ENCODE measurements at regions of chr12 and their contacts with region 1.

Region 1: GRCh38 chr12:2431810-2432209 is 363.0 kb upstream of the FKBP4 start:
- DNase-seq: no peak
- H3K4me3 ChIP-seq: no peak overlapping the region
- H3K27ac ChIP-seq: no peak overlapping the region
- H3K4me1 ChIP-seq: no peaks in the 10 kb centered on the region
- H3K27me3 ChIP-seq: no peaks in the 10 kb centered on the region
- CTCF ChIP-seq: no peak
- POLR2A ChIP-seq: no peak

Region 2: DNA sequence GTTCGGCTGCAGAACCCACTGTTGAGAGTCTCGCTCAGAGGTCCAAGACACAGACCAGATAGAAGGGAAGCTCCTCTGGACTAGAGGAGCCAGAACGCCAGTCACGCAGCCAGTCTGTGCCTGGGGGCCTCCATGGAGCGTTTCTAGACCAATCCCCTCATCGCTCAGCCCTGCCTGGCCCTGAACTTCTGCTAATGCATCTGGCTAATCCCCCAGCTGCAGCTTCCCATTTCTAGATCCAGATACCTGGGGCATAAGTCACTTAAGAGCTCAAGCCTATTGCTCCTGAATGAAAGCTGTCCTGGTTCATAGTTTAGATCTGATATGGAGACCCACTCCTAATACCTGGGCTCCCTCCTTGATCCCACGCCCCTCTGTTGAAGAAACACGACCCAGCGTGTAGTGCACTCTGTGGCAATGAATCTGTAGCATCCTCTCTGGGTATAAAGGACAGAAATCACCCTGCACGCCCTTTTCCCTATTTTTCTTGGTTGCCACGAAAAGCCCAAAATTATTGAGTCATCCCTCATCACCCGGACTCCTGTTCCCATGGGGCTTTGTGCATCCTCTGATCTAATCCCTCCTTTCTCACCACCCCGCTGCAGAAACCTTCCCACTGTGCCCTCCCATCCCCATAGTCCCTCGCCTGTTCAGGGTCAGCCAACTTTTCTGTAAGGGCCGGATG is 21.4 kb after region 1 on chr12:
- CTCF ChIA-PET with region 1: no interaction called
- POLR2A ChIA-PET with region 1: no interaction called
- dilution Hi-C with region 1: no loop called
- intact Hi-C with region 1: loop called (anchors 1 kb)
- DNase-seq: no peak
- H3K4me3 ChIP-seq: no peak overlapping the region
- H3K27ac ChIP-seq: no peak overlapping the region
- H3K4me1 ChIP-seq: no peaks in the 10 kb centered on the region
- H3K27me3 ChIP-seq: no peaks in the 10 kb centered on the region
- CTCF ChIP-seq: no peak
- POLR2A ChIP-seq: no peak

Region 3: GRCh38 chr12:2467447-2468195 is 35.8 kb after region 1 on chr12:
- CTCF ChIA-PET with region 1: no interaction called
- POLR2A ChIA-PET with region 1: no interaction called
- dilution Hi-C with region 1: no loop called
- intact Hi-C with region 1: no loop called
- DNase-seq: no peak
- H3K4me3 ChIP-seq: no peak overlapping the region
- H3K27ac ChIP-seq: no peak overlapping the region
- H3K4me1 ChIP-seq: no peaks in the 10 kb centered on the region
- H3K27me3 ChIP-seq: no peaks in the 10 kb centered on the region
- CTCF ChIP-seq: no peak
- POLR2A ChIP-seq: no peak

Measured in endothelial cell of umbilical vein (primary cell).